A549 (cell line): ENCODE measurements at regions of chr15 and their contacts with region 1.

Region 1: DNA sequence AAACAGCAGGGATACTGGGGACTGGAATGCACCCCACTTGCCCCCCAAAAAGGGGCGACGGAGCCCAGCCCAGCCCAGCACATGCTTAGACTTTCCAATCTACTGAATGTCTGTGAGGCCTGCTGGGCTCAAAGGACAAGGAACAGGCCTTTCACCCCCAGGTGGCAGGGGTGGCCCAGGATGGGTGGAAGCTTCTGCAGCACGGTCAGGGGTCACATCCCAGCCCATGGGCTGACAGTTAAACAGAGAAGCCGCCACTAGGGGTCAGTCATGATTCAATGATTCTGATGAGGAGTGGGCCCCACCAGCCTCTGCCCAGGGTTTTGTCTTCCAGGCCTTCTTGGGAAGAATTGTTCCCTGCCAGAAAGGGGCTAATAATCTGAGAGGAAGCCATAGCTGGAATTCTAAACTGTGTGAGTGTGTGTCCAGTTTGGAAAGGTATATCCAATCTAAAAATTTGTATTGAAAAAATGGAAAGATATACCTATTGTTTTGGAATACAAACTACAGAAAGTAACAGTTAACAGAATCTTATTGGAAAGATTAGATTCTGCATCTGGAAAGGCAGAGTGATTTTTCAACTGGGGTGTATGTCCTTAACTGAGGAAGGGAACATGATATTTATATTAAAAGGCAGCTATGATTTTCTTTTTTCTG is 2.2 kb downstream of the CHRNB4 start:
- DNase-seq: peak; percentile 70 to 93
- ATAC-seq: peak; percentile 64 to 89
- H3K4me3 ChIP-seq: no peak overlapping the region
- H3K27ac ChIP-seq: no peak overlapping the region
- H3K4me1 ChIP-seq: 0 out of 3 replicates have a peak, but pooled peaks cover 3% of the 10 kb centered on the region
- CTCF ChIP-seq: peak; percentile 92
- EP300 ChIP-seq: no peak
- POLR2A ChIP-seq: no peak
- RAD21 ChIP-seq: peak; percentile 87 to 88

Region 2: GRCh38 chr15:78422571-78423340 is 216.0 kb before region 1 on chr15:
- CTCF ChIA-PET with region 1: no interaction called
- POLR2A ChIA-PET with region 1: no interaction called
- DNase-seq: peak; percentile 74 to 82
- ATAC-seq: peak; percentile 80 to 90
- H3K4me3 ChIP-seq: no peak overlapping the region
- H3K27ac ChIP-seq: no peak overlapping the region
- H3K4me1 ChIP-seq: no peaks in the 10 kb centered on the region
- CTCF ChIP-seq: peak; percentile 95
- EP300 ChIP-seq: no peak
- POLR2A ChIP-seq: no peak
- RAD21 ChIP-seq: peak; percentile 64 to 72

Region 3: GRCh38 chr15:78618490-78618934 is 20.3 kb before region 1 on chr15:
- CTCF ChIA-PET with region 1: interaction called, 224 read pairs
- POLR2A ChIA-PET with region 1: no interaction called
- DNase-seq: peak; percentile 89 to 96
- ATAC-seq: peak; percentile 77 to 78
- H3K4me3 ChIP-seq: no peak overlapping the region
- H3K27ac ChIP-seq: no peak overlapping the region
- H3K4me1 ChIP-seq: peaks cover 14% of the 10 kb centered on the region; the same call in 2 of the 3 replicates
- CTCF ChIP-seq: peak; percentile 97
- EP300 ChIP-seq: no peak
- POLR2A ChIP-seq: no peak
- RAD21 ChIP-seq: peak; percentile 92 to 96

Region 4: DNA sequence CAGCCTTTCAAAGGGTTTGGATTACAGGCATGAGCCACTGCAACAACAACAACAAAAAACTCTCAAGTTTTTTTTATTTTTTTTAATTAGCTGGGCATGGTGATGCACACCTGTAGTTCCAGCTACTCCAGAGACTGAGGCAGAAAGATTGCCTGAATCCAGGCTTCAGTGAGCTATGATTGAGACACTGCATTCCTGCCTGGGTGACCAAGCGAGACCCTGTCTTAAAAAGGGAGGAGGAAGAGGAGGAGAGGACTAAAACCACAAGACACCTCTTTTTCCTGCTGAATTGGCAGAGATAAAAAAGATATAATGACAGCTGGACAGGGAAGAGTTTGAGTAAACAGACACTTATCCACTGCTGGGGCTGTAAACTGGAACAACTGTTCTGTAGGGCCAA is 24.9 kb after region 1 on chr15:
- CTCF ChIA-PET with region 1: interaction called, 20 read pairs
- POLR2A ChIA-PET with region 1: no interaction called
- DNase-seq: no peak
- ATAC-seq: no peak
- H3K4me3 ChIP-seq: no peak overlapping the region
- H3K27ac ChIP-seq: no peak overlapping the region
- H3K4me1 ChIP-seq: no peaks in the 10 kb centered on the region
- CTCF ChIP-seq: no peak
- EP300 ChIP-seq: no peak
- POLR2A ChIP-seq: no peak
- RAD21 ChIP-seq: no peak

Region 5: GRCh38 chr15:78734451-78735064 is 95.8 kb after region 1 on chr15:
- CTCF ChIA-PET with region 1: interaction called, 89 read pairs
- POLR2A ChIA-PET with region 1: no interaction called
- DNase-seq: no peak
- ATAC-seq: 0 out of 6 replicates have a peak, but pooled peaks of 1 of the 2 experiments have one; percentile 23
- H3K4me3 ChIP-seq: no peak overlapping the region
- H3K27ac ChIP-seq: 0 out of 6 replicates have a peak overlapping the region, but pooled peaks of 1 of the 2 experiments have one; percentile 7
- H3K4me1 ChIP-seq: no peaks in the 10 kb centered on the region; the same call in 2 of the 3 replicates
- CTCF ChIP-seq: no peak
- EP300 ChIP-seq: no peak
- POLR2A ChIP-seq: no peak
- RAD21 ChIP-seq: no peak

Region 6: GRCh38 chr15:78750566-78750965 is 111.8 kb after region 1 on chr15:
- CTCF ChIA-PET with region 1: interaction called, 55 read pairs
- POLR2A ChIA-PET with region 1: no interaction called
- DNase-seq: no peak
- ATAC-seq: peak; percentile 26 to 40
- H3K4me3 ChIP-seq: peak overlapping the region; percentile 32; the same call in 1 of the 3 replicates
- H3K27ac ChIP-seq: peak overlapping the region; percentile 26 to 60; a peak in 3 of 6 replicates
- H3K4me1 ChIP-seq: peaks cover 15% of the 10 kb centered on the region
- CTCF ChIP-seq: no peak
- EP300 ChIP-seq: no peak
- POLR2A ChIP-seq: no peak
- RAD21 ChIP-seq: no peak

Region 7: DNA sequence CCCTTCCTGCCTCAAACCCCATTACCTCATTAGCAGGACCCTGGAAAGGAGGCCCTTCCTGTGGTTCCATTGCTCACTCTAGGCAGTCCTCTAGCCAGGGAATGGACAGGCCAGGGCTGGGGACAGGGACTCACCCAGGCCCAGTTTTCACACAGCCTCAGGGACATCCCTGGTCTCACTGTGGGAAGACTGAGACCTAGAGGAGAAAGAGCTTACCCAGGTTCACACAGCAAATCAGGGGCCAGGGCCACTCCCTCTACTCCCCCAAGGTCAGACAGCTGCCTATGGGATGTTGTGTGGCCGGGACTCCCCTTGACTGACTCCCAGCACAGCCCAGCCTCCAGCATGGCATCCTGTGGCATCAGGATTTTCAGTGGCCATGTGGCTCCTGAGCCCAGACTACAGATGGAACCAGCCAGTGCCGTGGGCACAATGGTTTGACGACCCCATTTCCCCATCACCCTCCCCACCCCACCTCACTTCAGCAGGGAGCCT is 123.2 kb after region 1 on chr15:
- CTCF ChIA-PET with region 1: no interaction called
- POLR2A ChIA-PET with region 1: no interaction called
- DNase-seq: no peak
- ATAC-seq: no peak
- H3K4me3 ChIP-seq: no peak overlapping the region
- H3K27ac ChIP-seq: no peak overlapping the region
- H3K4me1 ChIP-seq: peaks cover 1% of the 10 kb centered on the region; the same call in 2 of the 3 replicates
- CTCF ChIP-seq: no peak
- EP300 ChIP-seq: no peak
- POLR2A ChIP-seq: no peak
- RAD21 ChIP-seq: no peak